Activated B cell treated with CpG ODN at 0.5 μM for 24 hours (primary cell): ENCODE measurements at regions of chr17 and their contacts with region 1.

Region 1: GRCh38 chr17:28357061-28357900 is at the start of gene POLDIP2:
- DNase-seq: peak; percentile 96
- ATAC-seq: peak; percentile 98
- H3K4me3 Mint-ChIP-seq: peak within 1 kb of the TSS; percentile 97
- H3K27ac Mint-ChIP-seq: peak within 1 kb of the TSS; percentile 93
- H3K4me1 Mint-ChIP-seq: peaks cover 26% of the 10 kb centered on the region
- H3K27me3 Mint-ChIP-seq: no peaks in the 10 kb centered on the region
- CTCF ChIP-seq: no peak
- total RNA-seq, gene POLDIP2: 60.5 and 65.2 TPM in 2 replicates

Region 2: GRCh38 chr17:28318759-28319660 is 38.3 kb before region 1 on chr17 and contains the start of gene TMEM97:
- CTCF ChIA-PET with region 1: no interaction called
- POLR2A ChIA-PET with region 1: interaction called, 7 read pairs
- intact Hi-C with region 1: loop called (anchors 1 kb)
- DNase-seq: peak; percentile 85
- ATAC-seq: peak; percentile 98
- H3K4me3 Mint-ChIP-seq: peak within 1 kb of the TSS; percentile 90
- H3K27ac Mint-ChIP-seq: peak within 1 kb of the TSS; percentile 76
- H3K4me1 Mint-ChIP-seq: peaks cover 25% of the 10 kb centered on the region
- H3K27me3 Mint-ChIP-seq: no peaks in the 10 kb centered on the region
- CTCF ChIP-seq: no peak
- total RNA-seq, gene TMEM97: 16.1 and 17.6 TPM in 2 replicates

Region 3: DNA sequence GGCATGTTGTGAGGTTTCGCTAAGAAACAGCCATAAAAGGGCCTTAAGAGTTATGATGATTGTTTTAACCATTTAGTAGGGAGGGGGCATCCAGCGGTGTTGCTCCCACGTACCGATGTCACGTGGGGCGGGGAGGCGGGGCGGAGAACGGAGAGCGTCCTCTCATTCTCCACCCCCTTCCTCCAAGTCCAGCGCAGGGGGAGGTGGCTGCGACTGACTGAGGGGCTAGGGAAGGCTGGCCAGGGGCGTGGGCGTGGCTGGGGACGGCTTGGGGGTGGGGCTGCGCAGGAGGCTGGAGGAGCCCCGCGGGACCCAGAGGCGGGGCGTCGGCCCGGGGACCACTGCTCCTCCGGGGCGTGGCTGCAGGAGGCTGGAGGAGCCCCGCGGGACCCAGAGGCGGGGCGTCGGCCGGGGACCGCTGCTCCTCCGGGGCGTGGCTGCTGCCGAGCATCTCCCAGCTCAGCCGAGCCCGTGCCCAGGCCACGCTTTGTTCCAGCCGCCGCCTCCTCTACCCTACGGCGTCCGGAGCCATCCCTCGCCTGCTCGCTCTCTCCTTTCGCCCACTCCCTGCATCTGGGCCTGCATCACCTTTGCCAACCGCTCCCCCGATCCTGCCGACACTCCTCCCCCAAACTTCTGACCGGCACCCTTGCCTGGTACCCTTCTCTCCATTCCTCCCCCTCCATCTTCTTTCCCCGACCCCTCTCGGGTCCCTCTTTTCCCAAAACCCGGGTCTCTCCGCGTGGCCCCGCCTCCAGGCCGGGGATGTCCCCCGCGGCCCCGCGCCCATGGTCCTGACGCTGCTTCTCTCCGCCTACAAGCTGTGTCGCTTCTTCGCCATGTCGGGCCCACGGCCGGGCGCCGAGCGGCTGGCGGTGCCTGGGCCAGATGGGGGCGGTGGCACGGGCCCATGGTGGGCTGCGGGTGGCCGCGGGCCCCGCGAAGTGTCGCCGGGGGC is 14.2 kb after region 1 on chr17 and contains the start of gene SARM1:
- CTCF ChIA-PET with region 1: interaction called, 3 read pairs
- POLR2A ChIA-PET with region 1: interaction called, 20 read pairs
- intact Hi-C with region 1: loop called (anchors 1 kb)
- DNase-seq: peak; percentile 82
- ATAC-seq: peak; percentile 90
- H3K4me3 Mint-ChIP-seq: peak within 1 kb of the TSS; percentile 94
- H3K27ac Mint-ChIP-seq: peak within 1 kb of the TSS; percentile 85
- H3K4me1 Mint-ChIP-seq: peaks cover 23% of the 10 kb centered on the region
- H3K27me3 Mint-ChIP-seq: no peaks in the 10 kb centered on the region
- CTCF ChIP-seq: no peak
- total RNA-seq, gene SARM1: 15.0 and 19.9 TPM in 2 replicates

Region 4: GRCh38 chr17:28384281-28385036 is 27.2 kb after region 1 on chr17:
- CTCF ChIA-PET with region 1: interaction called, 3 read pairs
- POLR2A ChIA-PET with region 1: interaction called, 12 read pairs
- intact Hi-C with region 1: no loop called
- DNase-seq: peak; percentile 33
- ATAC-seq: peak; percentile 91
- H3K4me3 Mint-ChIP-seq: peak overlapping the region; percentile 90
- H3K27ac Mint-ChIP-seq: no peak overlapping the region
- H3K4me1 Mint-ChIP-seq: peaks cover 30% of the 10 kb centered on the region
- H3K27me3 Mint-ChIP-seq: peaks cover 15% of the 10 kb centered on the region
- CTCF ChIP-seq: no peak